ENCODE measurements at regions of chr4 and their contacts with region 1.

Region 1: GRCh38 chr4:37802068-37802666 is 24.3 kb upstream of the PGM2 start:
- DNase-seq: peak; percentile 76

Region 2: GRCh38 chr4:38034986-38035882 is 233.1 kb after region 1 on chr4:
- in situ Hi-C with region 1: loop called (anchors 10 kb)
- DNase-seq: peak; percentile 66

Measured in KBM-7 (cell line).